ENCODE measurements at regions of chr10 and their contacts with region 1.

Region 1: GRCh38 chr10:69914398-69915214 is 112.9 kb downstream of the COL13A1 start:
- DNase-seq: peak; percentile 81
- H3K4me3 ChIP-seq: no peak overlapping the region
- H3K27ac ChIP-seq: no peak overlapping the region
- H3K4me1 ChIP-seq: peaks cover 20% of the 10 kb centered on the region
- H3K27me3 ChIP-seq: no peaks in the 10 kb centered on the region
- CTCF ChIP-seq: peak; percentile 96

Region 2: GRCh38 chr10:69222157-69223027 is 692.2 kb before region 1 on chr10:
- CTCF ChIA-PET with region 1: no interaction called
- POLR2A ChIA-PET with region 1: no interaction called
- intact Hi-C with region 1: no loop called
- DNase-seq: peak; percentile 81
- H3K4me3 ChIP-seq: no peak overlapping the region
- H3K27ac ChIP-seq: peak overlapping the region; percentile 33
- H3K4me1 ChIP-seq: peaks cover 21% of the 10 kb centered on the region
- H3K27me3 ChIP-seq: no peaks in the 10 kb centered on the region
- CTCF ChIP-seq: peak; percentile 82

Region 3: DNA sequence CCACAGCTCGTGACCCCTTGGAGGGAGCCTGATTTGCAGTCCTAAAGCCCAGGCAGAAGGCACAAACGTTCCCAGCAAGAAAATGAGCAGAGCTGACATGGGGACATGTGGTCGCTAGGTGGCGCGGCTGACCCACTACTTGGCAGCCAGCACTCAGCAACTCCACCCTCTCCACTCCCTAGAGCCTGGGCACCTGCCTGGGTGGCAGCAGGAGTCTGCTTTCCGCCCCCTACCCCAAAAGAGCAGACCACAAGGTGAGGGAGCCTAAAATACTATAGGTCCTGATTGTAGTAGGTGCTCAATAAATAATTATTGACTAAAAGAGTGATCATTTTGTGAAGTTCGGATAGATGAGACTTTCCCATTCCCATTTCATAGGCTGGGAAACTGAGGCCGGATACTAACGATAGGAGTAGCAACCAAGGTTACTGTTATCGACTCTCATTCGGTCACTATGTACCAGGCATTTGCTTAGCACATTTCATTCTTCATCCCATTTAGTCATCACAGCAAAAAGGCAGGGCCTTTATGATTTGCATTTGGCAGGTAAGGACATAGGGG is 398.8 kb before region 1 on chr10:
- CTCF ChIA-PET with region 1: interaction called, 5 read pairs
- POLR2A ChIA-PET with region 1: no interaction called
- intact Hi-C with region 1: loop called (anchors 5 kb)
- DNase-seq: peak; percentile 76
- H3K4me3 ChIP-seq: no peak overlapping the region
- H3K27ac ChIP-seq: no peak overlapping the region
- H3K4me1 ChIP-seq: no peaks in the 10 kb centered on the region
- H3K27me3 ChIP-seq: peaks cover 29% of the 10 kb centered on the region
- CTCF ChIP-seq: peak; percentile 90

Region 4: DNA sequence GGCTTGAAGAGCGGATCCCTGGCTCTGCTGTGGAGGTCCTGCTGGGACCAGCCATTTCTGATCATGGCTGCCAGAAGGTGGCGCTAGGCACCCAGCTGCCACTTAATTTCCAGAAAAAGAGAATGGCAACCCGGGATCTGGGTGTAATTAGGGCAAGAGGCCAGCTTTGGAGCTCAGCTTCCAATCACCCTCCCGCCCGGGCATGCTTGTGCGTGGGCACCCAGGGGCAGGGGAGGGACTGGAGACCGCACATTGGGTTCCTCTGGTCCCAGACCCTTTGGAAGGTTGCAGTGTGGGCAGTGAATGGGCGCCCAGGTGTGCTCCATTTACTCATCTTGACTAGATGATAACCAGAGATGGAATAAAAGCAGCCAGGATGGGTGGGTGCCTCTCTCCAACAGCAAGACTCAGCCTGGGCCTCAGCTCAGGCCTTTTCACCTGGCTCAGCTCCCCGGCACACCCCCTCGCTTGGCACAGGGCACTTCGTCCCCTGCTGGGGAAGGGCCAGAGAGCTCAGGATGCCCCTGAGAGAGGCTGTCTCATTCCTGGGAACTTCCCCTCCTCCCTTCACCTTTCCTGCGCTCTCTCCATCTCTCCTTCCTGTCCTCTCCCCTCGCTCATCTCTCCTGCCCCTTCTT is 269.8 kb before region 1 on chr10:
- CTCF ChIA-PET with region 1: interaction called, 10 read pairs
- POLR2A ChIA-PET with region 1: no interaction called
- intact Hi-C with region 1: loop called (anchors 2 kb)
- DNase-seq: peak; percentile 77
- H3K4me3 ChIP-seq: no peak overlapping the region
- H3K27ac ChIP-seq: no peak overlapping the region
- H3K4me1 ChIP-seq: no peaks in the 10 kb centered on the region
- H3K27me3 ChIP-seq: no peaks in the 10 kb centered on the region
- CTCF ChIP-seq: peak; percentile 91

Region 5: DNA sequence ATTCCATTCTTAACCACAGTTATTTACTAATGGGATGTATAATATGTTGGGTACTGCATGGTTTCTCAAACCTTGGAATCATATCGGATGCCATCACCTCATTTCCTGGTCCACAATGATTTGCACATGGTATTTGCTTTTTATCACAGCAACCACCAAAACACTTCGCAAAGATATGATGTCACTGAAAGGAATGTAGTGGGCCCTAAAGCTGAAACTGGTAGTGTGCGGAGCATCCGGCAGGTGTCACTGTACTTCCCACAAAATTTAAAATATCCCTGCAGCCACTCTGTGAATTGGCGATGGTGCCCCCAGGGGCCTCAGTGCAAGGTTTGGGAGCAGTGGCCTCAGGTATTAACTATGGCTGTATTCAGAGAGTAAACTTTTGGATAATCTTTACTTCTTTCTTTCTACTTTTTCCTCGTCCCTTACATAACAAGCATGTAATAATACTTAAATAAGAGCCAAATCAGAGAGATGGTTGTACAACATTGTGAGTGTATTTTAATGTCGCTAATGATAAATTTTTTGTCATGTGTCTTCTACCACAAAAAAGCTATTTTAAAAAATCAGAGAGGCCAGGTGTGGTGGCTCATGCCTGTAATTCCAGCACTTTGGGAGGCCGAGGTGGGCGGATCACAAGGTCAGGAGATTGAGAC is 218.4 kb before region 1 on chr10:
- CTCF ChIA-PET with region 1: interaction called, 12 read pairs
- POLR2A ChIA-PET with region 1: no interaction called
- intact Hi-C with region 1: loop called (anchors 5 kb)
- DNase-seq: peak; percentile 75
- H3K4me3 ChIP-seq: no peak overlapping the region
- H3K27ac ChIP-seq: no peak overlapping the region
- H3K4me1 ChIP-seq: no peaks in the 10 kb centered on the region
- H3K27me3 ChIP-seq: peaks cover 22% of the 10 kb centered on the region
- CTCF ChIP-seq: peak; percentile 80

Region 6: GRCh38 chr10:69742928-69743602 is 171.5 kb before region 1 on chr10:
- CTCF ChIA-PET with region 1: interaction called, 10 read pairs
- POLR2A ChIA-PET with region 1: no interaction called
- intact Hi-C with region 1: loop called (anchors 1 kb)
- DNase-seq: peak; percentile 54
- H3K4me3 ChIP-seq: no peak overlapping the region
- H3K27ac ChIP-seq: no peak overlapping the region
- H3K4me1 ChIP-seq: no peaks in the 10 kb centered on the region
- H3K27me3 ChIP-seq: no peaks in the 10 kb centered on the region
- CTCF ChIP-seq: peak; percentile 80

Region 7: DNA sequence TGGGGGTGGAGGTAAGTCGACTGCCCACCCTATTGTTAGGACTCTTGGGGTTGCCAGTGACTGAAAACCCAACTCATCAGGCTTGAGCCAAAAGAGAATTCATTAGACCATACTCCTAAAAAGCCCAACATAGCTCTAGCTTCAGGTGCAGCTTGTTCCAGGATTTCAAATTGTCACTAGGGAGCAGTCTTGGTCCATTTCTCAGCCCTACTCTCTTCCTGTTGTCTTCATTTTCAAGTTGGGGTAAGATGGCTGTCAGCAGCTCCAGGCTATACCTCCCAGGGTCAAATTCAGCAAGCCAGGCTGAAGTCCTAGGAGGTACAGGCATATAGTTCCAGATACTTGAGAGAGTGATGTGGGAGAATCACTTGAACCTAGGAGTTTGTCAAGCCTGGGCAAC is 127.8 kb before region 1 on chr10:
- CTCF ChIA-PET with region 1: interaction called, 27 read pairs
- POLR2A ChIA-PET with region 1: no interaction called
- intact Hi-C with region 1: loop called (anchors 2 kb)
- DNase-seq: peak; percentile 48
- H3K4me3 ChIP-seq: no peak overlapping the region
- H3K27ac ChIP-seq: no peak overlapping the region
- H3K4me1 ChIP-seq: no peaks in the 10 kb centered on the region
- H3K27me3 ChIP-seq: peaks cover 10% of the 10 kb centered on the region
- CTCF ChIP-seq: peak; percentile 40

Region 8: GRCh38 chr10:69800109-69800508 is 114.5 kb before region 1 on chr10:
- CTCF ChIA-PET with region 1: no interaction called
- POLR2A ChIA-PET with region 1: no interaction called
- intact Hi-C with region 1: loop called (anchors 2 kb)
- DNase-seq: peak; percentile 74
- H3K4me3 ChIP-seq: no peak overlapping the region
- H3K27ac ChIP-seq: no peak overlapping the region
- H3K4me1 ChIP-seq: peaks cover 15% of the 10 kb centered on the region
- H3K27me3 ChIP-seq: no peaks in the 10 kb centered on the region
- CTCF ChIP-seq: peak; percentile 87

Region 9: GRCh38 chr10:70272925-70273316 is 358.3 kb after region 1 on chr10:
- CTCF ChIA-PET with region 1: no interaction called
- POLR2A ChIA-PET with region 1: no interaction called
- intact Hi-C with region 1: no loop called
- DNase-seq: peak; percentile 41
- H3K4me3 ChIP-seq: no peak overlapping the region
- H3K27ac ChIP-seq: no peak overlapping the region
- H3K4me1 ChIP-seq: no peaks in the 10 kb centered on the region
- H3K27me3 ChIP-seq: no peaks in the 10 kb centered on the region
- CTCF ChIP-seq: peak; percentile 62

Region 10: DNA sequence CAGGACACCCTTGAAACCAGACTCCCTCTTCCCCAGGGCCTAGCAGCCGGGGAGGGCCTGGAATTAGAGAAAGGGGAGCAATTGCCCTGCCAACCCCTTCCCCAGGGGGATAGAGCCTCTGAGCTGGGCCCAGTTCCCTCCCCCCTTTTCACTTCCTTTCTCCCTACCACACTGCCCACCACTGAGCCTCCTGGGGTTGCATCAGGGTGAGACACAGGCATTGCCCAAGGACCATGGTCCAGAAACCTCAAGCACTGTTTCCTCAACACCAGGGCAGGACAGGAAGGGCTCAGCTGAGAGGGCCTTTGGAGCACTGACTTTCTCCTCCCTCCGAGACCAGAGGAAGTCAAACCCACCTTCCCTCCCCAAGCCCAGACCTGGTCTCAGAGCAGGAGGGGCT is 1860.7 kb after region 1 on chr10:
- CTCF ChIA-PET with region 1: no interaction called
- POLR2A ChIA-PET with region 1: no interaction called
- intact Hi-C with region 1: no loop called
- DNase-seq: no peak
- H3K4me3 ChIP-seq: no peak overlapping the region
- H3K27ac ChIP-seq: no peak overlapping the region
- H3K4me1 ChIP-seq: no peaks in the 10 kb centered on the region
- H3K27me3 ChIP-seq: no peaks in the 10 kb centered on the region
- CTCF ChIP-seq: no peak

Measured in A673 (cell line).